Activated CD4-positive, alpha-beta T cell treated with anti-CD3 and anti-CD28 coated beads, Interleukin-2, amount 10 ng/mL, durations not matched to agents 24 days and 14 days (primary cell): ENCODE measurements at regions of chr3 and their contacts with region 1.

Region 1: DNA sequence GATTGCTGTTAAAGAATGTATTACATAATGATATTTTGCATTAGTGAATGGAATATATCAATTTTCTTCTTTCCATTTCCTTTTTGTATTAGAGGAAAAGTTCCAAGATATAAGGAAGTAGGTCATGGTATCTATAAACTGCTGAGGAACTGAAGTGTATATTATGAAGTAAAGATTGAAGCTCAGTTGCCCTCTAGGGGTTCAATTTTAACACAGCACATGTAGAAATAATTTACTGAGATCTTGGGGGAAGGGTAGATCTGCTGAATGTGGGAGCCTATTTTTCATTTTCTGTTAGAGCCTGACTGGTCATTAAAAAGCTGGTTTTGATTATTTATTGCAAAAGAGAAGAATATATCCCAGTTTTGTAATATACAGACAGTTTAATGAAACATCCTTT is 45.2 kb downstream of the CMC1 start:
- DNase-seq: no peak
- H3K4me3 Mint-ChIP-seq: no peak overlapping the region
- H3K27ac Mint-ChIP-seq: no peak overlapping the region
- H3K4me1 Mint-ChIP-seq: peaks cover 12% of the 10 kb centered on the region
- H3K27me3 Mint-ChIP-seq: no peaks in the 10 kb centered on the region

Region 2: GRCh38 chr3:27721717-27722542 is 564.7 kb before region 1 on chr3 and contains the start of gene EOMES:
- intact Hi-C with region 1: loop called (anchors 1 kb)
- DNase-seq: peak; percentile 90
- H3K4me3 Mint-ChIP-seq: peak within 1 kb of the TSS; percentile 85
- H3K27ac Mint-ChIP-seq: peak within 1 kb of the TSS; percentile 66
- H3K4me1 Mint-ChIP-seq: peaks cover 32% of the 10 kb centered on the region
- H3K27me3 Mint-ChIP-seq: peaks cover 85% of the 10 kb centered on the region
- total RNA-seq, gene EOMES: 7.4 and 7.8 TPM in 2 replicates